GM12878 (cell line): ENCODE measurements at regions of chr2 and their contacts with region 1.

Region 1: GRCh38 chr2:231786177-231786916 is at the start of gene COPS7B:
- DNase-seq: peak; percentile 35
- ATAC-seq: peak; percentile 83
- H3K4me3 ChIP-seq: peak within 1 kb of the TSS; percentile 91
- H3K27ac ChIP-seq: peak within 1 kb of the TSS; percentile 71
- H3K4me1 ChIP-seq: peaks cover 13% of the 10 kb centered on the region
- H3K27me3 ChIP-seq: no peaks in the 10 kb centered on the region
- CTCF ChIP-seq: peak; percentile 42 to 58 (median 46); a peak in 4 of 6 replicates
- EP300 ChIP-seq: peak; percentile 12 to 63; a peak in 1 of 4 replicates
- POLR2A ChIP-seq: peak; percentile 78
- RAD21 ChIP-seq: peak; percentile 40; the same call in 1 of the 2 replicates
- polyA plus RNA-seq, gene COPS7B: 6.3 to 9.6 TPM

Region 2: DNA sequence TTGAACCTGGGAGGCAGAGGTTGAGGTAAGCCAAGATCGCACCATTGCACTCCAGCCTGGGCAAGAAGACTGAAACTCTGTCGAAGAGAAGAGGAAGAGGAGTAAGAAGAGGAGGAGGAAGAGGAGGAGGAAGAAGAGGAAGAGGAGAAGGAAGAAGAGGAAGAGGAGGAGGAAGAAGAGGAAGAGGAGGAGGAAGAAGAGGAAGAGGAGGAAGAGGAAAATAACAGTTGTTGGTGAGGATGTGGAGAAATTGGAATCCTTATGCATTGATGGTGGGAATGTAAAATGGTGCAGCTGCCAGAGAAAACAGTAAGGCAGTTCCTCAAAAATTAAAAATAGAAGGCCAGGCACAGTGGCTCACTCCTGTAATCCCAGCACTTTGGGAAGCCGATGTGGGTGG is 313.5 kb before region 1 on chr2:
- CTCF ChIA-PET with region 1: no interaction called
- POLR2A ChIA-PET with region 1: no interaction called
- RAD21 ChIA-PET with region 1: no interaction called
- SMC1A ChIA-PET with region 1: no interaction called
- in situ Hi-C with region 1: no loop called
- intact Hi-C with region 1: no loop called
- DNase-seq: no peak
- ATAC-seq: no peak
- H3K4me3 ChIP-seq: no peak overlapping the region
- H3K27ac ChIP-seq: no peak overlapping the region
- H3K4me1 ChIP-seq: no peaks in the 10 kb centered on the region
- H3K27me3 ChIP-seq: no peaks in the 10 kb centered on the region
- CTCF ChIP-seq: no peak
- EP300 ChIP-seq: no peak
- POLR2A ChIP-seq: no peak
- RAD21 ChIP-seq: no peak

Region 3: DNA sequence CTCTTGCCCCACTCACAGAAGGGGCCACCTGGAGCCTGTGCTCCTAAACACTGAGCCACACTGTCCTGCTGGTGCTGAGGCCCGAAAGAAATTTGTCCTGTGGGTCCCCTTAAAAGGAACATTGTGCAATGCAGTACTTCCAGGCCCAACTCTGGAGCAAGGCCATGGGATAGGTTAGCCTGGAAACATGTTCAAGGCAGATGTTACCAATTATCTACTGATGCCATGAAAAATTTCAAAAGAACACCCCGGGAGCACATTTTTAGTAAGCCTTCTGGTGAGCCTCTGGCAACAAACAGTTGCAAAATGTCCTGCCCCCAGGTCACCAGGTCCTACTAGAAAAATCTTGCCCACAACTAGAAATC is 90.4 kb before region 1 on chr2:
- CTCF ChIA-PET with region 1: no interaction called
- POLR2A ChIA-PET with region 1: no interaction called
- RAD21 ChIA-PET with region 1: no interaction called
- SMC1A ChIA-PET with region 1: no interaction called
- in situ Hi-C with region 1: no loop called
- intact Hi-C with region 1: no loop called
- DNase-seq: no peak
- ATAC-seq: no peak
- H3K4me3 ChIP-seq: no peak overlapping the region
- H3K27ac ChIP-seq: no peak overlapping the region
- H3K4me1 ChIP-seq: no peaks in the 10 kb centered on the region
- H3K27me3 ChIP-seq: no peaks in the 10 kb centered on the region
- CTCF ChIP-seq: no peak
- EP300 ChIP-seq: no peak
- POLR2A ChIP-seq: no peak
- RAD21 ChIP-seq: no peak

Region 4: DNA sequence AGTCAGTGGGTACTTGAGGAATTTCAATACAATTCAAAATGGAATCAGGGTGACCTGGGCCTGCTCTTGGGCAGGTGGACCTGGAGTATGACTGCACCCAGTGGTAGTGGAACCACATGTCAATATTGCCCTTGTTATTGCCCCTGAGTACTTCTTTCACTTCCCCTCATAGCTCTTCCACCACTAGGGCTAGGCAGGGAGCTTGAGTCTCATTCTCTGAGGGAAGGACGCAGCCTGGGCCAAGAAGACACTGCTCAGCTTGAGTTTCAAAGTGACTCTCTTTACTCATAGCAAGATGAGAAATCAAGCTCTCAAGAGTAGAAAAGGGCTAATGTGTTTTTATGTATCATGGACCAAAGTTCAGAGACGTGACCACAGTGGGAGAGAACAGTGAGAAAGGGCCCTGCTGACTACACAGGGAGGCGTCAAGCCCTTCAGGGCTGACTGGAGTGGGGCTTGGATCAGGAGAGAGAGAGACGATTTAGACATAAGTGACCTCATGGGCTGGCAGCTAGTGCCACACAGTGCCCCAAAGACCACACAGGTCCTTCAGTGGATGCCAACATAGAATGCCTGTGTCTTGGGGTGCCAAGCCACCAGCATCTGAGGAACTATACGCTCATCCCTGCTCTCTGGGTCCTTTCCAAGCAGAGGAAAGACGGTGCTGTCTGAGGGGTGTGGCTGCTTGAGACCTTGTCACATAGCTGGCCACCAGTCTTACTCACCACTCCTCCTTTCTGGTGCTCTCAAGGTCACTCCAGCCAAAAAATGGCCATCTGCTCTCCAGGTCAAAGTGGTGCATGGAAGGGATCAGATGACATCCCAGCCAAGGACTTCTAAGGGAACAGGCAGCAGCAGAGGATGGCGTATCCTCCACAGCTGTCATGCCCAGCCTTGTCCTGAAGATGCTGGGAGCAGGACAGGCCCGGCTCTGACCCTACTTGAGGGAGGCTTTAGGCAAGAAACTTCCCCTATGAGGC is 65.1 kb before region 1 on chr2:
- CTCF ChIA-PET with region 1: no interaction called
- POLR2A ChIA-PET with region 1: interaction called, 7 read pairs
- RAD21 ChIA-PET with region 1: interaction called, 10 read pairs
- SMC1A ChIA-PET with region 1: interaction called, 8 read pairs
- in situ Hi-C with region 1: no loop called
- intact Hi-C with region 1: loop called (anchors 2 kb)
- DNase-seq: peak; percentile 80
- ATAC-seq: peak; percentile 93
- H3K4me3 ChIP-seq: no peak overlapping the region
- H3K27ac ChIP-seq: peak overlapping the region; percentile 71
- H3K4me1 ChIP-seq: peaks cover 26% of the 10 kb centered on the region
- H3K27me3 ChIP-seq: no peaks in the 10 kb centered on the region
- CTCF ChIP-seq: peak; percentile 23 to 43 (median 28); a peak in 4 of 6 replicates
- EP300 ChIP-seq: peak in 1 of 2 experiments; percentile 52; a peak in 1 of 4 replicates
- POLR2A ChIP-seq: peak; percentile 39; the same call in 1 of the 2 replicates
- RAD21 ChIP-seq: 0 out of 2 replicates have a peak, but pooled peaks have one; percentile 42

Region 5: DNA sequence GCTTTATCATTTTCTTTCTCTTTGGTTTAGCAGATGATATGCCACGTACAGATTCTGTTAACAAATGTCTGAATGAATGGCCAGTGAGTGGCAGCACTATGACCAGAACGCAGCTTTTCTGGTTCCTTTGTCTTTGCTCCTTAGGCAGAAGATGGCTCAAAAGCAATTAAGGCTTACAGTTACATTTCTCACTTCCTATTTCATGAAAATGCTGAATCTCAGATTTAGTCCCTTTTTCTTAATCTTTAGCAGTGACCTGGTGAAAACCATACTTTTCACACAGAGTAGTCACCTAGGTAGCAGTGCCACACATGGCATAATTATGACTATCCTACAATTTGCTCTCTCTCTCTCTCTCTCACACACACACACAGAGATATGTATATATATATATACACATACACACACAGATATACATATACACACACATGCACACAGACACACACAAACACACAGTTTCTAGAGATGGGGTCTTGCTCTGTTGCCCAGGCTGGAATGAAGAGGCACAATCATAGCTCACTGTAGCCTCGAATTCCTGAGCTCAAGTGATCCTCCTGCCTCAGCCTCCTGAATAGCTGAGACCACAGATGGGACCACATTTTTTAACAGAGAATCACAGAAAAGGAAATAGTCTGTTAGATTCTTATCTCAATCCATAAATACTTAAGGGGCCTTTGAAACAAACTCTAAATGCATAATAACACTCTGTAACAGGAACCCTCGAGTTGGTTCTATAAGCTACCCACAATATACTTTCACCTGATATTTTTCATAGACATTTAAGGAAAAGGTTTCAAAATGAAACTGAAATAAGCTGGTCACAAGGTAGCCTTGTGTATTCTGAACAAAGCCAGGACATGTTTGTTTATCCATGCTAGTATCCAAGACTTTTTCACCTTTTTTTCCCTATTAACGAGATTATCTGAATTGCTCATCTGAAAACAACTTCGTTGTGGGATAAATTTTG is 16.9 kb before region 1 on chr2:
- CTCF ChIA-PET with region 1: interaction called, 20 read pairs
- POLR2A ChIA-PET with region 1: interaction called, 9 read pairs
- RAD21 ChIA-PET with region 1: interaction called, 8 read pairs
- SMC1A ChIA-PET with region 1: interaction called, 19 read pairs
- in situ Hi-C with region 1: no loop called
- intact Hi-C with region 1: loop called (anchors 1 kb)
- DNase-seq: peak; percentile 51
- ATAC-seq: peak; percentile 81
- H3K4me3 ChIP-seq: peak overlapping the region; percentile 16; the same call in 1 of the 2 replicates
- H3K27ac ChIP-seq: peak overlapping the region; percentile 76
- H3K4me1 ChIP-seq: peaks cover 32% of the 10 kb centered on the region
- H3K27me3 ChIP-seq: no peaks in the 10 kb centered on the region
- CTCF ChIP-seq: peak in 1 of 3 experiments; percentile 30; a peak in 2 of 6 replicates
- EP300 ChIP-seq: peak in 1 of 2 experiments; percentile 38; a peak in 1 of 4 replicates
- POLR2A ChIP-seq: no peak
- RAD21 ChIP-seq: peak; percentile 29; the same call in 1 of the 2 replicates

Region 6: GRCh38 chr2:231800493-231801091 is 14.2 kb after region 1 on chr2:
- CTCF ChIA-PET with region 1: interaction called, 10 read pairs
- POLR2A ChIA-PET with region 1: no interaction called
- RAD21 ChIA-PET with region 1: no interaction called
- SMC1A ChIA-PET with region 1: interaction called, 4 read pairs
- in situ Hi-C with region 1: no loop called
- intact Hi-C with region 1: no loop called
- DNase-seq: no peak
- ATAC-seq: peak; percentile 86
- H3K4me3 ChIP-seq: no peak overlapping the region
- H3K27ac ChIP-seq: no peak overlapping the region
- H3K4me1 ChIP-seq: no peaks in the 10 kb centered on the region
- H3K27me3 ChIP-seq: no peaks in the 10 kb centered on the region
- CTCF ChIP-seq: peak; percentile 55 to 78 (median 73)
- EP300 ChIP-seq: no peak
- POLR2A ChIP-seq: no peak
- RAD21 ChIP-seq: 0 out of 2 replicates have a peak, but pooled peaks have one; percentile 26